ENCODE measurements at regions of chr19 and their contacts with region 1.

Region 1: DNA sequence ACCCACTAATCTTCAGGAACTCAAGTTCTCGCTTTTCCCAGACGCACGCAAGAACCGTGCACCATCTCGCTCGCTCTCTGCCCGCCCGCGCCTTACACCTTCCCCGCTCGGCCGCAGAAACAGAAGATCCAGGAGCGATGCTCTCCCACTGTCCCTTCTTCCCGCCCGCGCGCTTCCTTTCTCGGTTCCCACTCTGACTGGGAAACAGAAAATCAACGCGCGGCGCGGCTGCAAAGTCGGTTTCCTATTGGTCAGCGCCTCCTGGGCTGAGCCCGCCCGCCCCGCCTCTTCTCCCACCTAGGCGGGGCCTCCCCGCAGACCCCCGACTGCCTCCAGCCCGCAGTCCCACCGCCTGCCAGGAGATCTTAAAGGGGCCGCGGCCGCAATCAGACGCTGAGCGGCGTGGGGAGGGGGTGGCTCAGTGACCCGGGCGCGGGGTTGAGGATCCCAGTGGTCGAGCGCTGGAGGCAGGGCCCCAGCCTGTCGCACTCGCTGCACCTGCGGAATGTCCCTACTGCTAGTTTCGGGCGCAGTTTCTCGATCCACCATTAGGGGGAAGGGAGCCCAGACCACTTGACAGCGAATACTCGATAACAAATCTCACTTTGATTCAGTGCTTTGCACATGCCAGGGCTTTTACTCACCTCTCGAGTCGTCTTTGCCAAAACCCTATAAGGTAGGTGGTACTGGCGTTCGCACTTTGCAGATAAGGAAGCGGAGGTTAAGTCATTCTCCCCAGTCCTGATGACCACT is 685 bp upstream of the SLC25A23 start:
- DNase-seq: peak; percentile 99
- ATAC-seq: peak; percentile 83
- H3K4me3 Mint-ChIP-seq: peak overlapping the region; percentile 78
- H3K27ac Mint-ChIP-seq: peak overlapping the region; percentile 82
- H3K4me1 Mint-ChIP-seq: peaks cover 18% of the 10 kb centered on the region
- H3K27me3 Mint-ChIP-seq: no peaks in the 10 kb centered on the region

Region 2: DNA sequence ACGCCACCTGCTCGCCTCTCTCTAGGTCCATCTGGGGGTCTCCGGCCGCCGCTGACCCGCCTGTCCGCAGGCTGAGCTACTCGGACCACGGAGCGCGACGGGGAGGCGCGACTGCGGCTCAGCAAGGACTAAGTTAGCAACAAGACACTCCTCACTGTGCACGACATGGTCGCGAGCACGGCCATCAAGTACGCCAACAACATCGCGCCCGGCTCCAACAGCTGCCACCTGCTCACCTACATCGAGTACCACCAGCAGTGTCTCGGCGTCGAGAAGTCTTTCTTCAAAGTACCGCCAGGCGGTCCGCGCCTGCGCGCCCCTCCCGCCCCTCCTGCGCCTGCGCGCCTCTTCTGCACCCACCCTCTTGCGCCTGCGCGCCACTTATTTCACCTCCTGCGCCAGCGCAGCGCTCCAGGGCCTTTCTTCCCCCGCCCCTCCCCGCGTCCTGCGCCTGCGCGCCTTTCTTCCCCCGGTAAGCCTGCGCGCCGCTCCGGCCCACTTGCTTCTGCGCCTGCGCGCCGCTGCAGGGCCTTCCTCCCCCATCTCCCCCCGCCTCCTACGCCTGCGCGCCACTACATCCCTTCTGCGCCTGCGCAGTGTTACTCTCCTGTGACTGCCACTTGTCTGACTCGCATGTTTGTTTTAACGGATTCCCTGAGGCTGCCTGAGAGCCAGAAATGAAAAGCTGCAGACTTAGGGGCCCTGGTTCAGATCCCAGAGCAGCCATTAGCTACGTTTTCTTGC is 260.9 kb before region 1 on chr19:
- CTCF ChIA-PET with region 1: no interaction called
- POLR2A ChIA-PET with region 1: no interaction called
- intact Hi-C with region 1: loop called in 1 of 2 experiments (anchors 1 kb)
- DNase-seq: peak; percentile 100
- ATAC-seq: peak; percentile 95
- H3K4me3 Mint-ChIP-seq: peak overlapping the region; percentile 100
- H3K27ac Mint-ChIP-seq: peak overlapping the region; percentile 92
- H3K4me1 Mint-ChIP-seq: peaks cover 12% of the 10 kb centered on the region
- H3K27me3 Mint-ChIP-seq: no peaks in the 10 kb centered on the region

Region 3: GRCh38 chr19:6393074-6393983 is 66.9 kb before region 1 on chr19 and contains the start of gene GTF2F1:
- CTCF ChIA-PET with region 1: no interaction called
- POLR2A ChIA-PET with region 1: no interaction called
- intact Hi-C with region 1: loop called in 1 of 2 experiments (anchors 1 kb)
- DNase-seq: peak; percentile 96
- ATAC-seq: peak; percentile 89
- H3K4me3 Mint-ChIP-seq: peak within 1 kb of the TSS; percentile 85
- H3K27ac Mint-ChIP-seq: peak within 1 kb of the TSS; percentile 91
- H3K4me1 Mint-ChIP-seq: peaks cover 22% of the 10 kb centered on the region
- H3K27me3 Mint-ChIP-seq: no peaks in the 10 kb centered on the region
- total RNA-seq, gene GTF2F1: 60.9 to 78.5 TPM

Region 4: GRCh38 chr19:6481541-6482342 is 21.5 kb after region 1 on chr19 and contains the start of gene DENND1C:
- CTCF ChIA-PET with region 1: no interaction called
- POLR2A ChIA-PET with region 1: no interaction called
- intact Hi-C with region 1: loop called (anchors 1 kb)
- DNase-seq: peak; percentile 84
- ATAC-seq: peak; percentile 79
- H3K4me3 Mint-ChIP-seq: peak within 1 kb of the TSS; percentile 88
- H3K27ac Mint-ChIP-seq: peak within 1 kb of the TSS; percentile 96
- H3K4me1 Mint-ChIP-seq: peaks cover 25% of the 10 kb centered on the region
- H3K27me3 Mint-ChIP-seq: no peaks in the 10 kb centered on the region
- total RNA-seq, gene DENND1C: 49.5 to 56.3 TPM

Region 5: GRCh38 chr19:6510618-6511017 is 50.3 kb after region 1 on chr19:
- CTCF ChIA-PET with region 1: no interaction called
- POLR2A ChIA-PET with region 1: no interaction called
- intact Hi-C with region 1: no loop called
- DNase-seq: no peak
- ATAC-seq: no peak
- H3K4me3 Mint-ChIP-seq: no peak overlapping the region
- H3K27ac Mint-ChIP-seq: no peak overlapping the region
- H3K4me1 Mint-ChIP-seq: no peaks in the 10 kb centered on the region
- H3K27me3 Mint-ChIP-seq: no peaks in the 10 kb centered on the region

Region 6: DNA sequence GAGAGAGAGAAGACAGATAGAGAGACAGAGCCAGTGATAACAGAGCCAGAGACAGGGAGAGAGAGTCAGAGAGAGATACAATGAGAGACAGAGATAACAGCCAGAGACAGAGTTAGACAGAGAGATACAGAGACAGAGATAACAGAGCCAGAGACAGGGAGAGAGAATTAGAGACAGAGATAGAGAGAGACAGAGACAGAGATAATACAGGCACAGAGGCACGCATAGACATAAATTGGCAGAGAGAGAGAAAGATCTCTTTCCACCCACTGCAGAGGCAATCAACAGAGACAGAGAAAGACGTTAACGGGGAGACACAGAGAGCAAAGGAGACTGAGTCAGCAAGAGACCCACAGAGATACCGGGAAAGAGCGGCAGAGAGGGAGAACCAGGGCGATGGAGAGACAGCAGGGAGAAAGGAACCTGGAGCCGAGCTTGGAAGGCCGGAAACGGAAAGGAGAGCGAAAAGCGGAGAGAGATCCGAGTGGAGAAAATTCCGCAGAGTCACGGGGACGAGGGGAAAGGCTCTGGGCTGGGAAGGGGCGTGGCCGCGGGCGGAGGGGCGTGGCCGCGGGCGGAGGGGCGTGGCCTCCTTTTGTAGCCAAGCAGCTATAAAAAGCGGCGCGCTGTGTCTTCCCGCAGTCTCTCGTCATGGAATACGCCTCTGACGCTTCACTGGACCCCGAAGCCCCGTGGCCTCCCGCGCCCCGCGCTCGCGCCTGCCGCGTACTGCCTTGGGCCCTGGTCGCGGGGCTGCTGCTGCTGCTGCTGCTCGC is 70.3 kb after region 1 on chr19 and contains the start of gene TNFSF9:
- CTCF ChIA-PET with region 1: no interaction called
- POLR2A ChIA-PET with region 1: no interaction called
- intact Hi-C with region 1: loop called in 1 of 2 experiments (anchors 1 kb)
- DNase-seq: peak; percentile 90
- ATAC-seq: peak; percentile 73
- H3K4me3 Mint-ChIP-seq: peak within 1 kb of the TSS; percentile 77
- H3K27ac Mint-ChIP-seq: peak within 1 kb of the TSS; percentile 80
- H3K4me1 Mint-ChIP-seq: peaks cover 30% of the 10 kb centered on the region
- H3K27me3 Mint-ChIP-seq: peaks cover 36% of the 10 kb centered on the region
- total RNA-seq, gene TNFSF9: 0.49 to 0.57 TPM

Region 7: GRCh38 chr19:6767357-6768235 is 307.3 kb after region 1 on chr19 and contains the start of gene SH2D3A:
- CTCF ChIA-PET with region 1: no interaction called
- POLR2A ChIA-PET with region 1: no interaction called
- intact Hi-C with region 1: loop called in 1 of 2 experiments (anchors 1 kb)
- DNase-seq: peak; percentile 97
- ATAC-seq: peak; percentile 78
- H3K4me3 Mint-ChIP-seq: peak within 1 kb of the TSS; percentile 83
- H3K27ac Mint-ChIP-seq: peak within 1 kb of the TSS; percentile 94
- H3K4me1 Mint-ChIP-seq: peaks cover 42% of the 10 kb centered on the region
- H3K27me3 Mint-ChIP-seq: no peaks in the 10 kb centered on the region
- total RNA-seq, gene SH2D3A: 20.7 to 23.2 TPM

Measured in activated CD4-positive, alpha-beta T cell treated with anti-CD3 and anti-CD28 coated beads for 36 hours (primary cell).